ENCODE measurements at regions of chr2 and their contacts with region 1.

Region 1: GRCh38 chr2:98560256-98560771 is 48.0 kb downstream of the COA5 start:
- DNase-seq: peak; percentile 82

Region 2: GRCh38 chr2:98444436-98445176 is 115.7 kb before region 1 on chr2 and contains the start of gene INPP4A:
- intact Hi-C with region 1: loop called (anchors 2 kb)
- DNase-seq: peak; percentile 89
- total RNA-seq, gene INPP4A: 19.9 TPM

Region 3: DNA sequence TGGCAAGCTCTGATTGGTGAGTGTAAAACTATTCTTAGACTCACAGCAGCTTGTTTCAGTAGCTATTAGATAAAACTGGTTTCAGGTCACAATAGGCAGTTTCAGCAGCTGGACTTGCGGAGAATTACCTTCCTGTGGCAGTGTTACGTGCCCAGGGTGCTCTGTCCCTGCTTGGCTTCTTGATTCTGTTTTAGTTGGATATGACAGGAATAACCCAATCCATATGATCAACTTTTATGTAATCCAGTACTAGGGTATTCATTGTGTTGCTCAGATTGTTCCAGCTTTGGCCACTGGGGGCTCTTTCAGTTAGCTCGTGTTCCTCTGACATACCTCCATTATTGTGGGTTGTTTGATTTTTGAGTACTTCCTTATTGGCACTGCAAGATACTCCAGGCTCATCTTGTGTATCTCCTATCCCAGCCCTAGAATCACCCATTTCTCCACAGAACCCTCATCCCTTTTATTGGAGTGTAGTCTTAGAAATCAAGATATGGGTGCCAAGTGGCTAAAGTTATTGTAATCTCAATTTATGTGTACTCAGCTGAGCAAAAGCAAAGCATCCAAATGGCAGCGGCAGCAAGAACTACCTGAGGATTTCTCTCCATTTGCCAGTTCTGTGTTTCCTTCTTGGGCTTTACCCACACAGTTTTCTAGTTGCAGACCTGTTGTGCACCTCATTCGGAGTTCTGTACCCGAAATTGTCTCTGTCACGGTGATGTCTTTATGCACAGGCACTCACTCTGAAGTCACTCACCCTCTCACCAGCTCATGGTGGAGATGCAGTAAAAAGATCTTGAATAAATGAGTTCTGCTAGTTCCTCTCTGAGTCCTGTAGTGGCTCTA is 72.3 kb before region 1 on chr2:
- intact Hi-C with region 1: loop called (anchors 10 kb)
- DNase-seq: no peak

Region 4: DNA sequence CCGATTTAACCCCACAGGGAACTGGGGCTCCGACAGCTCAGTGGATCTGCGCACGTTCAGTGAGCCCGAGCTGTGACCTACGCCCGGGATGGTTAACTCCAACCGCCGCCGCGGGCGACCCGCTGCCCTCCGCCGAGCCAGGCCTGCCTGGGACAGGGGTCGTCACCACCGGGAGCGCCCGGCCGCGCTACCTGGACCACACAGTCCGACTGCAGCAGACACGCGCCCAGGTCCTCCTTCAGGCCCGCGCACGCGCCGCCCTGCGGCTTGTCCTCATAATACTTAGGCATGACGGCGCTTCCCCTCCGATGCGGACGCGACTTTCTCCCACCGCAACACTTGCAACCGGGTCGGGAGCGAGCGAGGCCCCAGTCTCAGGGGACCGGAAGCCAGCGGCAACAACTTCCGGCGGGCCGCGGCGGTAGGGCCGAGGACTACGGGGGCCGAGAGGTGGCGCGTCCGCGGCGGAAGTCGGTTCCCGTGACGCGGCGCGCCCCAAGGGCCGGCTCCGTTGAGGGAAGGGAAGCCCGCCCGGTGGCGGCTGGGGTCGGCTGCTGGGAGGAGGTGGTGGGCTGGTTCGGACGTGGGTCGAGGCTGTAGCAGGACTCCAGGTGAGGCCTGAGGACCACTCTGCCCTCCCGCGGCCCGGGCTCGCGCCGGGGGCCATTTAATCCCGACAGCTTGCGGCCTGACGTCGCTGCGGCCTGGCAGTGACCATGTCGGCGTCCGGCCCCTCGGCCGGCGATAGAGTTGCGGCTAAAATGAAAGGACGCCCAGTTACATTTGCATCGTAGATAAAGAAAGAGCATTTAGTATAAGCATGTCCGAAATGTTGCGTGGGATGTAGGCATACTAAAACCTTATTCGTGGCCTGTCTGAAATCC is 48.0 kb after region 1 on chr2 and contains the starts of genes COA5 and UNC50:
- intact Hi-C with region 1: loop called (anchors 5 kb)
- DNase-seq: peak; percentile 95
- total RNA-seq, gene COA5: 28.3 TPM
- total RNA-seq, gene UNC50: 27.9 TPM

Region 5: DNA sequence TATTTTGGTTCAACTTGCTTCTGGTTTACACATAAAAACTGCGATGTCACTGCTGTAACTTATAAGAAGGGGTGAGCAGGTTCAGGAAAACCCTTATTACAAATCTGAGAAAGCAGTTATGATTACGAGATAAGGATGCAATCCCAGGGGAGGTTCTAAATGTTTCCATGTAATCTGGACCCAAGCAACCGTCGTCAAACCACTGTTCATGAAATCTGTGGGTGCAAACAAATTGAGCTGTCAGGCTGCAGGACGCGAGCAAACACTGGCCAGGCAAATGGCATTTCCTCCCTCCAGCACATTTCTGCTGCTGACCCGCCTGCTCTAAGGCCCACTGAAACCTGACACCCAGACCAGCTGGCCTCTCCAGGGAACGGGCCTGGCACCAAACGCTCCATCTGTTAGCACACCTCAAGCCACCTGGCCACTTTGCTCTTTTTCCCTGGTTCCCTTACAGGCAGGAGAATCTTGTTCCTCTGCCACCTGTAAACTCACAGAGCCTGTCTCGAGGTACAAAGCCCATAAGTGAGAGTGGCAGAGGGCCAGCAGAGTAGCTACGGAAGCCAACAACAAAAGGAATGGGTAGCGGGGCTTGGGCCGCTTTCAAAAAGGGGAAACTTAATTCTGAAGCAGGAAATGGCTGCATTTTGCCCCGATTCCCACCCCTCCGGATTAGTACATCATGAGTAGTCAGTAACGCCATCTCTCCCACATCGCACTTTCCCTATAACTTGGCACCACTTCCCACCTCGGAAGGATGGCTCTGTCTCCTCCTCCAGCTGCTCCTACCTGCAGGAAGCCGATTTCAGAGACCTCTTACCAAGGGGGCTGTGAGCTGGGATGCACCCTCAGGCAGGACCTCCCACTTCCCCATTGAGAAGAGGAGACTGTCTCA is 349.2 kb after region 1 on chr2:
- intact Hi-C with region 1: no loop called
- DNase-seq: peak; percentile 76

Measured in cardiac septum (tissue), 1 donor.